Gastrocnemius medialis (tissue), 4 donors: ENCODE measurements at regions of chr3 and their contacts with region 1.

Region 1: DNA sequence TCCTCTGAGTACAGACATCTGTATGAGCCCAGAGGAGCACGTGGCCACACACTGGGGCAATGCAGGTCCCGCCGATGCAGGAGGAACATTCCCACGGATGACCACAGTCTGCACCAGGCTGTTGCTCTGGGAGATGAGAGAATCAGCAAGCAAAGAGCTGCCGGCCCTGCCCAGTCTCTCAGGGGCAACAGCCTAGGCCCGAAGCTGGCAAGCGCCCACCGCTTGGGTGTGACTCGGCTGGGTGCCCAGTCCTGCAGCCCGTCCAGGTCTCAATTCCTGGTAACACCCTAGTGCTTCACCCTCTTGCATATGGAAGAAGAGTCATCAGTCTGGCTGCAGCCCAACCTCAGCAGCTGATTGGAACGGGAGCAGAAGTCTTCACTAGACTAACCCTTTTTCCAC is 153.7 kb upstream of the HES1 start:
- DNase-seq: peak; percentile 44 to 80
- ATAC-seq: peak; percentile 74 to 89
- H3K4me3 ChIP-seq: no peak overlapping the region
- H3K27ac ChIP-seq: peak overlapping the region in 1 of 4 donors; percentile 18
- H3K4me1 ChIP-seq: peaks cover 9 to 38% of the 10 kb centered on the region in 2 donors
- H3K27me3 ChIP-seq: no peaks in the 10 kb centered on the region
- CTCF ChIP-seq: no peak
- POLR2A ChIP-seq: no peak

Region 2: DNA sequence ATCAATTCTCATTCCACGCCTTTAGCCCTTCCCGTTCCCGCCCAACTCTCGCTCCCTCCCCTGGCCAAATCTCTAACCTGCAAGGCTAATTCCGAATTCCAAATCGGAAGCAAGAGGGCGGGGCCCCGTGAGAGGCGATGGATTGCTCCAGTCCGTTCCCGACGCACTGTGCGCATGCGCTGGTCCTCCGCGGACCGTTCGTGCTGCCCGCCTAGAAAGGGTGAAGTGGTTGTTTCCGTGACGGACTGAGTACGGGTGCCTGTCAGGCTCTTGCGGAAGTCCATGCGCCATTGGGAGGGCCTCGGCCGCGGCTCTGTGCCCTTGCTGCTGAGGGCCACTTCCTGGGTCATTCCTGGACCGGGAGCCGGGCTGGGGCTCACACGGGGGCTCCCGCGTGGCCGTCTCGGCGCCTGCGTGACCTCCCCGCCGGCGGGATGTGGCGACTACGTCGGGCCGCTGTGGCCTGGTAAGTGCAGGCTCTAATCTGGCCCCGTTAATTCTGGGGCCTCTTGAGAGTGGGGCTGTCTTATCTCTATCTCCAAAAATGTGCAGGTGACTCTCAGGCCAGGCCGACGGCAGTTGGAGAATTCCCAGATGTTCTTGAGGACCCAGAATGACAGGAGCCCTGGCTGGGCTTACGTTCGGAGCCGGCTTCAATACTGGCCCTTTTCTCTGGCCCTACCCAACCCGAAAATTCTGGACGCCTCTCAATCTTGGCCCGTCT is 389.2 kb before region 1 on chr3 and contains the start of gene OPA1:
- in situ Hi-C with region 1: no loop called
- intact Hi-C with region 1: loop called (anchors 5 kb)
- DNase-seq: peak; percentile 95 to 97
- ATAC-seq: peak; percentile 96 to 97
- H3K4me3 ChIP-seq: peak within 1 kb of the TSS; percentile 87 to 98 (median 96)
- H3K27ac ChIP-seq: peak within 1 kb of the TSS; percentile 94 to 95 (median 95)
- H3K4me1 ChIP-seq: peaks cover 22% of the 10 kb centered on the region in 2 donors
- H3K27me3 ChIP-seq: no peaks in the 10 kb centered on the region
- CTCF ChIP-seq: peak in 4 of 5 experiments; percentile 27 to 49 (median 32)
- POLR2A ChIP-seq: peak; percentile 60 to 73
- total RNA-seq, gene OPA1: 59.8 to 78.2 (median 72.2) TPM

Region 3: GRCh38 chr3:193701904-193702635 is 280.2 kb before region 1 on chr3:
- in situ Hi-C with region 1: no loop called
- intact Hi-C with region 1: no loop called
- DNase-seq: no peak
- ATAC-seq: no peak
- H3K4me3 ChIP-seq: no peak overlapping the region
- H3K27ac ChIP-seq: no peak overlapping the region
- H3K4me1 ChIP-seq: no peaks in the 10 kb centered on the region
- H3K27me3 ChIP-seq: no peaks in the 10 kb centered on the region
- CTCF ChIP-seq: no peak
- POLR2A ChIP-seq: no peak

Region 4: GRCh38 chr3:193788189-193788991 is 193.9 kb before region 1 on chr3:
- in situ Hi-C with region 1: loop called in 1 of 4 experiments (anchors 25 kb)
- intact Hi-C with region 1: no loop called
- DNase-seq: peak; percentile 30 to 53
- ATAC-seq: peak; percentile 93 to 97
- H3K4me3 ChIP-seq: no peak overlapping the region
- H3K27ac ChIP-seq: no peak overlapping the region
- H3K4me1 ChIP-seq: peaks cover 7 to 8% of the 10 kb centered on the region in 2 donors
- H3K27me3 ChIP-seq: no peaks in the 10 kb centered on the region
- CTCF ChIP-seq: peak; percentile 68 to 89 (median 78)
- POLR2A ChIP-seq: no peak